CD14-positive monocyte (primary cell): ENCODE measurements at regions of chr2 and their contacts with region 1.

Region 1: GRCh38 chr2:62410015-62410453 is 96.0 kb downstream of the TMEM17 start:
- DNase-seq: no peak
- H3K4me3 ChIP-seq: no peak overlapping the region
- H3K4me3 Mint-ChIP-seq: no peak overlapping the region
- H3K27ac ChIP-seq: no peak overlapping the region
- H3K27ac Mint-ChIP-seq: no peak overlapping the region
- H3K4me1 ChIP-seq: peaks cover 12 to 22% of the 10 kb centered on the region in 2 donors
- H3K4me1 Mint-ChIP-seq: peaks cover 18% of the 10 kb centered on the region
- H3K27me3 ChIP-seq: no peaks in the 10 kb centered on the region
- H3K27me3 Mint-ChIP-seq: peaks cover 0 to 1% (median 1%) of the 10 kb centered on the region in 3 donors
- CTCF ChIP-seq: no peak

Region 2: DNA sequence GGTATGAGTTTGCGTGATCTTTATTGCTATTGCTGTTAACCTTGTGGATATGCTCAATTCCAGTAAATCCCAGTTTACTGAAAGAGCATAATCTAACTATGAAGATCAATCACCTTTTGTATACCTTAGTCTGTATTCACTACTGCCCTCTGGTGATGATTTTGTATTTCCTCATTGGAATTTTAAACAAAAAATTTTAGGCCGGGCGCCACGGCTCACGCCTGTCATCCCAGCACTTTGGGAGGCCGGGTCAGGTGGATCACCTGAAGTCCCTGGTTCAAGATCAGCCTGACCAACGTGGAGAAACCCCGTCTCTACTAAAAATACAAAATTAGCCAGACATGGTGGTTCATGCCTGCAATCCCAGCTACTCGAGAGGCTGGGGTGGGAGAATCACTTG is 499.4 kb before region 1 on chr2:
- intact Hi-C with region 1: loop called in 1 of 2 experiments (anchors 5 kb)
- DNase-seq: no peak
- H3K4me3 ChIP-seq: no peak overlapping the region
- H3K4me3 Mint-ChIP-seq: no peak overlapping the region
- H3K27ac ChIP-seq: no peak overlapping the region
- H3K27ac Mint-ChIP-seq: no peak overlapping the region
- H3K4me1 ChIP-seq: peaks cover 5 to 10% of the 10 kb centered on the region in 2 donors
- H3K4me1 Mint-ChIP-seq: peaks cover 10% of the 10 kb centered on the region
- H3K27me3 ChIP-seq: no peaks in the 10 kb centered on the region
- H3K27me3 Mint-ChIP-seq: peaks cover 0 to 2% (median 0%) of the 10 kb centered on the region in 3 donors
- CTCF ChIP-seq: peak; percentile 8

Region 3: DNA sequence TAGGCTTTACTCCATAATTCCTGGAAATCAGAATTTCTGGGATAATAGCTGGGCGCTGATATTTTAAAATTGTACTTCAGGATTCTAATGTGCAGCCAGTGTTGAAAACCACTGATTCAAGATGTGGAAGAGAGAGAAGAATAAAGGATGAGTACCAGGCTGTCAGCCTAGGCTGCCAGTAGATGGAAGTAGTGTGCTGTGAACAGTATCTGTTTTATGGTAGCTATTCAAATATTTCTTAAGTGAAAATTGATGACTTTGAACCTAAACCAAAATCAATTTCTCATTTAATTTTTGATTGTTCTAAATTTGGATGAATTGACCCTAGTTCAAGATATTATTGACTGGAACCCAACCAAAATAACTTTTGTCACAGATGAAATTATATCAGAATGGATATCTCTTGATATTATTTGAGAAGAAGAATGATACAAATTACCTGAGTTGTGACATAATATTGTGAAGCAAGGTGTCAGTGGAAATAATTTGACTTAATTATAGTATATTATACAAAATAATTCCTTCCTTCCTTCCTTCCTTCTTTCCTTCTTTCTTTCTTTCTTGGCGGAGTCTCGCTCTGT is 416.5 kb before region 1 on chr2:
- intact Hi-C with region 1: loop called (anchors 2 to 5 kb)
- DNase-seq: peak in 2 of 3 donors; percentile 36 to 49
- H3K4me3 ChIP-seq: no peak overlapping the region
- H3K4me3 Mint-ChIP-seq: no peak overlapping the region
- H3K27ac ChIP-seq: no peak overlapping the region
- H3K27ac Mint-ChIP-seq: peak overlapping the region in 1 of 7 donors; percentile 30
- H3K4me1 ChIP-seq: peaks cover 0 to 11% of the 10 kb centered on the region in 2 donors
- H3K4me1 Mint-ChIP-seq: peaks cover 16% of the 10 kb centered on the region
- H3K27me3 ChIP-seq: no peaks in the 10 kb centered on the region
- H3K27me3 Mint-ChIP-seq: peaks cover 0 to 2% (median 2%) of the 10 kb centered on the region in 3 donors
- CTCF ChIP-seq: peak; percentile 75